ENCODE measurements at regions of chr17 and their contacts with region 1.

Region 1: GRCh38 chr17:2122641-2123302 is 67.9 kb downstream of the HIC1 start:
- DNase-seq: peak in 2 of 3 donors; percentile 79 to 84
- H3K4me3 ChIP-seq: peak overlapping the region in 3 of 7 experiments; percentile 24 to 44 (median 37)
- H3K27ac ChIP-seq: no peak overlapping the region
- H3K4me1 ChIP-seq: peaks cover 19 to 39% (median 28%) of the 10 kb centered on the region in 4 experiments
- H3K27me3 ChIP-seq: no peaks in the 10 kb centered on the region

Region 2: GRCh38 chr17:2023692-2024571 is 98.8 kb before region 1 on chr17:
- CTCF ChIA-PET with region 1: no interaction called
- POLR2A ChIA-PET with region 1: no interaction called
- DNase-seq: peak; percentile 86 to 93 (median 90)
- H3K4me3 ChIP-seq: peak overlapping the region in 6 of 7 experiments; percentile 46 to 75 (median 60)
- H3K27ac ChIP-seq: no peak overlapping the region
- H3K4me1 ChIP-seq: peaks cover 0 to 57% (median 50%) of the 10 kb centered on the region in 4 experiments
- H3K27me3 ChIP-seq: peaks cover 9 to 49% (median 26%) of the 10 kb centered on the region in 5 experiments

Region 3: GRCh38 chr17:2137342-2138098 is 14.7 kb after region 1 on chr17:
- CTCF ChIA-PET with region 1: interaction called, 30 read pairs
- POLR2A ChIA-PET with region 1: interaction called, 4 read pairs
- DNase-seq: peak in 1 of 3 donors; percentile 32
- H3K4me3 ChIP-seq: no peak overlapping the region
- H3K27ac ChIP-seq: no peak overlapping the region
- H3K4me1 ChIP-seq: peaks cover 12 to 23% (median 20%) of the 10 kb centered on the region in 4 experiments
- H3K27me3 ChIP-seq: no peaks in the 10 kb centered on the region

Region 4: DNA sequence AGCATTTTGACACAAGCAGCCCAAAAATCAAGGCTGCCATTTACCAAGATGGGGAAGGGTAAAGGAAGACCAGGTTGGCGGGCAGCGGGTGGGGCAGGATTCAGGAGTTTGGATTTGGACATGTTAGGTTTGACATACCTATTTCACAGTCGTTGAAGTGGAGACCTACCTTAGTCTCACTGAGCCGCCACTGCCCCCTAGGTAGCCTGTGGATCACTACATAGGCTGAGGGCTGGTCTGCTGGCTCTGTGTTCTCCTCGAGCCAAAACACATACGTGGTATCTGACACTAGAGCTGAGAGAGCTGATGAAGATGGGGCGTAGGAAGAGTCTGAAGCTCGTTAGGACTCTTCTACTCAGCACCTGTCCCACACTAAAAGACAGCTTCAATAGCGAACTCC is 47.3 kb after region 1 on chr17:
- CTCF ChIA-PET with region 1: interaction called, 10 read pairs
- POLR2A ChIA-PET with region 1: no interaction called
- DNase-seq: peak; percentile 42 to 53 (median 43)
- H3K4me3 ChIP-seq: no peak overlapping the region
- H3K27ac ChIP-seq: no peak overlapping the region
- H3K4me1 ChIP-seq: peaks cover 0 to 5% (median 2%) of the 10 kb centered on the region in 4 experiments
- H3K27me3 ChIP-seq: no peaks in the 10 kb centered on the region

Region 5: DNA sequence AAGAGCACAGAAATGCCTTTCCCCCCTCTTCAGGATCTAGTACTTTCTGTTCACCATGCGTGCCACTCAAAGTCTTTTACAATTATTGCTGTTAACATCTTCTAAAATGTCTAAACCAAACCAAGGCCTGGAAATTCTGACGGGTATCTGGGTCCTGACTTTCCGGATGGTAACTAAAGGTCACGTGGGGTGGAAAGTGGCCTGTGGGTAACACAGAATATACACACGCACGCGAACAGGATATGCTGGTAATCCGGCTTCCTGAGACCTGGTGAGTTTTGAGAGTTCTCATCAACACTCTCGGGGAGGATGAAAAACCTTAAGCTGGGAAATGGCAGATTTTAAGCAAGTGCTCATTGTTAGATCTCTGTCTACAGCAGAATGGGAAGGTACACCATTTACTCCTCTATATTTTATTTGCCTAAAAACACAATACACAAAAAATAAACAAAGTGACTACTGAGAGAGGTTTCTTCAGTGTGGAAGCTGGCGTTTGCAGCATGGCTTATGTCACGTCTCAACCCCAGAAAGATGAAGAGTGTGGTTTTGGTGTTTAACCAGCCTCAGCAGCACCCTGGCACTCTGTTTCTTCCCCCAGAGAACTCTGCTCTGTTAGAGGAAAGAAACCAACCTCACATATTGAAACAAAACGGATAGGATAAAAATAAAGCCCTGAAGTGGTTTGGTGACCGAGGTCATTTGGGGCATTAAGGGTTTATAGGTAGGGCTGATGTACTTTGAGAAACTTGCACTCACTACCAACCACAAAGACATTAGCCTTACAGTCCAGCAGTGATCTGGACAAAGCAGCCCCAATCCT is 143.5 kb after region 1 on chr17:
- CTCF ChIA-PET with region 1: no interaction called
- POLR2A ChIA-PET with region 1: no interaction called
- DNase-seq: peak; percentile 83 to 92 (median 89)
- H3K4me3 ChIP-seq: peak overlapping the region in 4 of 7 experiments; percentile 6 to 45 (median 26)
- H3K27ac ChIP-seq: peak overlapping the region; percentile 82 to 91
- H3K4me1 ChIP-seq: peaks cover 0 to 29% (median 21%) of the 10 kb centered on the region in 4 experiments
- H3K27me3 ChIP-seq: no peaks in the 10 kb centered on the region

Measured in common myeloid progenitor, CD34-positive (primary cell).